Activated CD8-positive, alpha-beta T cell treated with anti-CD3 and anti-CD28 coated beads for 36 hours (primary cell): ENCODE measurements at regions of chr9 and their contacts with region 1.

Region 1: GRCh38 chr9:113275157-113276131 is at the starts of genes CDC26 and PRPF4:
- DNase-seq: peak; percentile 99
- ATAC-seq: peak; percentile 91
- H3K4me3 Mint-ChIP-seq: no peak within 1 kb of the TSS
- H3K27ac Mint-ChIP-seq: no peak within 1 kb of the TSS
- H3K4me1 Mint-ChIP-seq: peaks cover 32% of the 10 kb centered on the region
- H3K27me3 Mint-ChIP-seq: no peaks in the 10 kb centered on the region
- CTCF ChIP-seq: no peak
- total RNA-seq, gene CDC26: 28.0 to 30.4 TPM
- total RNA-seq, gene PRPF4: 52.9 to 56.5 TPM

Region 2: GRCh38 chr9:113261917-113262671 is 13.3 kb before region 1 on chr9:
- CTCF ChIA-PET with region 1: interaction called, 10 read pairs
- POLR2A ChIA-PET with region 1: no interaction called
- intact Hi-C with region 1: no loop called
- DNase-seq: no peak
- ATAC-seq: no peak
- H3K4me3 Mint-ChIP-seq: no peak overlapping the region
- H3K27ac Mint-ChIP-seq: no peak overlapping the region
- H3K4me1 Mint-ChIP-seq: no peaks in the 10 kb centered on the region
- H3K27me3 Mint-ChIP-seq: no peaks in the 10 kb centered on the region
- CTCF ChIP-seq: no peak

Region 3: GRCh38 chr9:113317777-113318176 is 42.3 kb after region 1 on chr9:
- CTCF ChIA-PET with region 1: no interaction called
- POLR2A ChIA-PET with region 1: no interaction called
- intact Hi-C with region 1: no loop called
- DNase-seq: no peak
- ATAC-seq: no peak
- H3K4me3 Mint-ChIP-seq: no peak overlapping the region
- H3K27ac Mint-ChIP-seq: no peak overlapping the region
- H3K4me1 Mint-ChIP-seq: no peaks in the 10 kb centered on the region
- H3K27me3 Mint-ChIP-seq: no peaks in the 10 kb centered on the region
- CTCF ChIP-seq: no peak

Region 4: DNA sequence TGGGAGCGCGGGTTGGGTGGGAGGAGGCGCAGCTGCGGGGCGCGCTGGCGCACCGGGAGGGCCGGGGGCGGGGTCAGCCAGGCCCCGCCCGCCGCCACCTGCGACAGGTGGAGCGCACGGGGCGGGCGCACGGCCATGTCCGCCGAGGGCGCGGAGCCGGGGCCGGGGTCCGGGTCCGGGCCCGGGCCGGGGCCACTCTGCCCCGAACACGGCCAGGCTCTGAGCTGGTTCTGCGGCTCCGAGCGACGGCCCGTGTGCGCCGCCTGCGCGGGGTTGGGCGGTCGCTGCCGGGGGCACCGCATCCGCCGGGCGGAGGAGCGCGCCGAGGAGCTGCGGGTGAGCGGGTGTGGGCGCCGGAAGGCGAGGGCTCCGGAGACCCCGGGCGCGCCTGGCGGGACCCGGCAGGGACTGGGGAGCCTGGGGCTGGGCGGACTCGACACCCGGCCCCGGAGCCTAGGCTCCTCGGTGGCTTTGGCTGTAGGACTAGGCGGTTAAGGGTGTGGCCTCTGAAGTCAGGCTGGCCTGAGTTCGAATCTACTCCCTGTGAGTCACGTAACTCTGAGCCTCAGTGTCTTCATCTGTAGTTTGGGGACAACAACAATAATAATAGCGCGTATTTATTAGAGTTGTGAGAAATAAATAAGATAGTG is 74.1 kb after region 1 on chr9 and contains the start of gene BSPRY:
- CTCF ChIA-PET with region 1: interaction called, 13 read pairs
- POLR2A ChIA-PET with region 1: interaction called, 3 read pairs
- intact Hi-C with region 1: loop called (anchors 10 kb)
- DNase-seq: peak; percentile 50
- ATAC-seq: peak; percentile 45
- H3K4me3 Mint-ChIP-seq: peak within 1 kb of the TSS; percentile 78
- H3K27ac Mint-ChIP-seq: peak within 1 kb of the TSS; percentile 77
- H3K4me1 Mint-ChIP-seq: peaks cover 39% of the 10 kb centered on the region
- H3K27me3 Mint-ChIP-seq: peaks cover 13% of the 10 kb centered on the region
- CTCF ChIP-seq: no peak
- total RNA-seq, gene BSPRY: 8.2 to 9.1 TPM

Region 5: DNA sequence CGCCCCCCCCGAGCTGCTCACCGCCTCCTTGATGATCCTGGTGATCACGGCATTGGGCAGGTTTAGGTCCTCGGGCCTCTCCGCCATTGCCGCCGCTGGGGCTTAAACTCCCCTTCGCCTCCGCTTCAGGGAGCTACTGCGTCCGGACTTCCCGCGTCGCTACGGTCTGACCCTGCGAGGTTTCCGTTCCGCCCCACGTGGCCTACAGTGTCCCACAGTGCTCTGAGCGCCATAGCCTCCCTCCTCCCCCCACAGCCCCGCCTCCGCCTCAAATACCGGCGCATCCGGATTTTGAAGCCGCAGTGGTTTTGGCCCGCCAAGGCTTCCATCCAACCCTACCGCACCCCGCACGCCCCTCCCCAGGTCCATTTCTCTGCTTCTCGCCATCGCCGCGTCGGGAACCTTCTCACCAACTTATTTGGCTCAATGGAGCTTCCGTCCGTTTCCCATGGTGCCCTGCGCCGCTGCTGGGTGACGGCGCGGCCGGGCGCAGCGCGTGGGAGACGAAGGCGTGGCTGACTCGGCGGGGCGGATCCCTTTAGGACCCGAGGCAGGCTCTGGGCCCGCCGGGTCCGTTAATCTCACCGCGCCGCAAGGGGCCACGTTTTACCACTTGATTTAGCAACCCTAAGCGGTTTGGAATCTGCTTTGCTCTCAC is 134.9 kb after region 1 on chr9 and contains the starts of genes C9orf43 and POLE3:
- CTCF ChIA-PET with region 1: interaction called, 49 read pairs
- POLR2A ChIA-PET with region 1: interaction called, 19 read pairs
- intact Hi-C with region 1: loop called (anchors 2 kb)
- DNase-seq: peak; percentile 98
- ATAC-seq: peak; percentile 92
- H3K4me3 Mint-ChIP-seq: peak within 1 kb of the TSS; percentile 86
- H3K27ac Mint-ChIP-seq: peak within 1 kb of the TSS; percentile 99
- H3K4me1 Mint-ChIP-seq: peaks cover 32% of the 10 kb centered on the region
- H3K27me3 Mint-ChIP-seq: no peaks in the 10 kb centered on the region
- CTCF ChIP-seq: no peak
- total RNA-seq, gene C9orf43: 0.74 to 0.83 TPM
- total RNA-seq, gene POLE3: 49.0 to 50.9 TPM

Region 6: GRCh38 chr9:113578882-113579282 is 303.4 kb after region 1 on chr9:
- CTCF ChIA-PET with region 1: interaction called, 24 read pairs
- POLR2A ChIA-PET with region 1: interaction called, 3 read pairs
- intact Hi-C with region 1: no loop called
- DNase-seq: peak; percentile 96
- ATAC-seq: peak; percentile 71
- H3K4me3 Mint-ChIP-seq: peak overlapping the region; percentile 85
- H3K27ac Mint-ChIP-seq: peak overlapping the region; percentile 95
- H3K4me1 Mint-ChIP-seq: peaks cover 83% of the 10 kb centered on the region
- H3K27me3 Mint-ChIP-seq: no peaks in the 10 kb centered on the region
- CTCF ChIP-seq: no peak